ENCODE measurements at regions of chr1 and their contacts with region 1.

Region 1: DNA sequence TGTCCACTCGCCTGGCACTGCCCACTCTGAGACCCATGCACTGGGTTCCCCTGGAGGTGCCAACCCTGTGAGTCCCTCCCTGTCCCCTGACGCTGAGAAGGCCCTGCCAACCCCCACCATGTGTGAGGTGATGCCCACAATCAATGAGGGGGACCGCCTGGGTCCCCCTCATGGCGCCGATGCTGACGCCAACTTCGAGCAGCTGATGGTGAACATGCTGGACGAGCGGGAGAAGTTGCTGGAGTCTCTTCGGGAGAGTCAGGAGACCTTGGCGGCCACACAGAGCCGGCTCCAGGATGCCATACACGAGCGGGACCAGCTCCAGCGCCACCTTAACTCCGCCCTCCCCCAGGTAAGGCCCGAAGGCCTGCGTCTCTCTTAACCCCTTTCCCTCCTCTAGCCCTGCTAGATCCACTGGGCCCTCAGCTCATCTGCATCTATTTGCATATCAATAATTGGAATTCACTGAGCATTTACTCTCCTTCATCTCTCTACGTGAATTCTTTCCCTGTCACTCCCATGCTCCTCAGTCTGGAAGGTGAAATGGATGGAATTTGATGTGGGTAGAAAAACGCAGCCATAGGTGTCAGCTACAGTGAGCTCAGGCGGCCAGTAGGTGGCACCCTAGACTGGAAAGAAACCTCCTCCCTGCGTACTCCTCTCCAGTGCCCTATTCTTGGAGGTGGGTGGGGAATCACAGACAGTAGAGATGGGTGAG is 12.8 kb downstream of the PPFIA4 start:
- DNase-seq: peak; percentile 83
- H3K4me3 Mint-ChIP-seq: no peak overlapping the region
- H3K27ac Mint-ChIP-seq: no peak overlapping the region
- H3K4me1 Mint-ChIP-seq: no peaks in the 10 kb centered on the region
- H3K27me3 Mint-ChIP-seq: peaks cover 100% of the 10 kb centered on the region
- CTCF ChIP-seq: peak; percentile 91

Region 2: GRCh38 chr1:203172128-203173010 is 133.3 kb after region 1 on chr1:
- CTCF ChIA-PET with region 1: interaction called, 11 read pairs
- intact Hi-C with region 1: no loop called
- DNase-seq: peak; percentile 91
- H3K4me3 Mint-ChIP-seq: no peak overlapping the region
- H3K27ac Mint-ChIP-seq: no peak overlapping the region
- H3K4me1 Mint-ChIP-seq: no peaks in the 10 kb centered on the region
- H3K27me3 Mint-ChIP-seq: peaks cover 77% of the 10 kb centered on the region
- CTCF ChIP-seq: peak; percentile 97